GM12878 (cell line): ENCODE measurements at regions of chr17 and their contacts with region 1.

Region 1: GRCh38 chr17:45307290-45308015 is 9.4 kb downstream of the MAP3K14 start:
- DNase-seq: peak; percentile 90
- ATAC-seq: peak; percentile 64
- H3K4me3 ChIP-seq: peak overlapping the region; percentile 14; the same call in 1 of the 2 replicates
- H3K27ac ChIP-seq: peak overlapping the region; percentile 94
- H3K4me1 ChIP-seq: peaks cover 82% of the 10 kb centered on the region
- H3K27me3 ChIP-seq: no peaks in the 10 kb centered on the region
- CTCF ChIP-seq: 0 out of 6 replicates have a peak, but pooled peaks of 1 of the 3 experiments have one; percentile 5
- EP300 ChIP-seq: peak; percentile 75 to 78; a peak in 3 of 4 replicates
- POLR2A ChIP-seq: no peak
- RAD21 ChIP-seq: no peak

Region 2: GRCh38 chr17:44781553-44782495 is 525.6 kb before region 1 on chr17:
- CTCF ChIA-PET with region 1: no interaction called
- POLR2A ChIA-PET with region 1: no interaction called
- RAD21 ChIA-PET with region 1: no interaction called
- SMC1A ChIA-PET with region 1: no interaction called
- in situ Hi-C with region 1: no loop called
- intact Hi-C with region 1: no loop called
- DNase-seq: no peak
- ATAC-seq: no peak
- H3K4me3 ChIP-seq: no peak overlapping the region
- H3K27ac ChIP-seq: no peak overlapping the region
- H3K4me1 ChIP-seq: no peaks in the 10 kb centered on the region
- H3K27me3 ChIP-seq: no peaks in the 10 kb centered on the region; a peak in 1 of 4 replicates
- CTCF ChIP-seq: no peak
- EP300 ChIP-seq: no peak
- POLR2A ChIP-seq: no peak
- RAD21 ChIP-seq: no peak

Region 3: GRCh38 chr17:45228763-45229539 is 78.5 kb before region 1 on chr17:
- CTCF ChIA-PET with region 1: interaction called, 10 read pairs
- POLR2A ChIA-PET with region 1: interaction called, 140 read pairs
- RAD21 ChIA-PET with region 1: interaction called, 22 read pairs
- SMC1A ChIA-PET with region 1: interaction called, 16 read pairs
- in situ Hi-C with region 1: no loop called
- intact Hi-C with region 1: no loop called
- DNase-seq: peak; percentile 68
- ATAC-seq: peak; percentile 56
- H3K4me3 ChIP-seq: peak overlapping the region; percentile 89
- H3K27ac ChIP-seq: peak overlapping the region; percentile 100
- H3K4me1 ChIP-seq: peaks cover 66% of the 10 kb centered on the region
- H3K27me3 ChIP-seq: no peaks in the 10 kb centered on the region
- CTCF ChIP-seq: no peak
- EP300 ChIP-seq: peak; percentile 84 to 91; a peak in 2 of 4 replicates
- POLR2A ChIP-seq: peak; percentile 75
- RAD21 ChIP-seq: no peak

Region 4: DNA sequence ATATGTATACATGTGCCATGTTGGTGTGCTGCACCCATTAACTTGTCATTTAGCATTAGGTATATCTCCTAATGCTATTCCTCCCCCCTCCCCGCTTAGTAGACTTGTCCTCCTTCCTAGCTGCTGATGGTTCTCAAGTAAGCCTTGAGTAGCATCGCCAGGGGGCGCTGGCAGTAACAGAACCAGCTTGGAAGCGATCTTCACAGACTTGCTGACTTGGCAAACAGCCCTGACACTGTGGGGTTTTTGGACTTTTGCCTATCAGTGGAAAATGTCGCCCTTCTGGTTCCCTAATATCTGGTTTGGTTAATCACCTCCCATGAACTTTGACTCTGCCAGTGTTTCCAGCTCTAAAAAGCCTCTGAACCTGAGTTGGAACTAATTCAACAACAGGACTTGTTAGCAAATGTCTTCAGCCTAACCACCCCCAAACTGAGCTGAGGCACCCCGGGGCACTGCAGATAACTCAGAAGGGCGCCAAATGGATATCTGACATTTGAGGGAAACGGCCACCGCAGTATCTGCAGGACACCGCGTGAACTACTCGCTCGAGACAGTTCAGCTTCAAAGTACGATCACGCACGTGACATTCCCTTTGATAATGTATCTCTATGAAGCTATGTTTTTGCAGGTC is 30.1 kb before region 1 on chr17:
- CTCF ChIA-PET with region 1: interaction called, 194 read pairs
- POLR2A ChIA-PET with region 1: interaction called, 19 read pairs
- RAD21 ChIA-PET with region 1: interaction called, 42 read pairs
- SMC1A ChIA-PET with region 1: interaction called, 75 read pairs
- in situ Hi-C with region 1: no loop called
- intact Hi-C with region 1: no loop called
- DNase-seq: peak; percentile 66
- ATAC-seq: peak; percentile 99
- H3K4me3 ChIP-seq: no peak overlapping the region
- H3K27ac ChIP-seq: 0 out of 2 replicates have a peak overlapping the region, but pooled peaks have one; percentile 22
- H3K4me1 ChIP-seq: peaks cover 4% of the 10 kb centered on the region; the same call in 1 of the 2 replicates
- H3K27me3 ChIP-seq: no peaks in the 10 kb centered on the region
- CTCF ChIP-seq: peak; percentile 73 to 85 (median 81)
- EP300 ChIP-seq: no peak
- POLR2A ChIP-seq: no peak
- RAD21 ChIP-seq: peak; percentile 94

Region 5: GRCh38 chr17:45325810-45326209 is 18.4 kb after region 1 on chr17:
- CTCF ChIA-PET with region 1: interaction called, 10 read pairs
- POLR2A ChIA-PET with region 1: interaction called, 7 read pairs
- RAD21 ChIA-PET with region 1: interaction called, 6 read pairs
- SMC1A ChIA-PET with region 1: interaction called, 17 read pairs
- in situ Hi-C with region 1: no loop called
- intact Hi-C with region 1: no loop called
- DNase-seq: no peak
- ATAC-seq: no peak
- H3K4me3 ChIP-seq: no peak overlapping the region
- H3K27ac ChIP-seq: no peak overlapping the region
- H3K4me1 ChIP-seq: peaks cover 22% of the 10 kb centered on the region
- H3K27me3 ChIP-seq: no peaks in the 10 kb centered on the region
- CTCF ChIP-seq: no peak
- EP300 ChIP-seq: no peak
- POLR2A ChIP-seq: no peak
- RAD21 ChIP-seq: no peak

Region 6: GRCh38 chr17:45371414-45372327 is 64.2 kb after region 1 on chr17:
- CTCF ChIA-PET with region 1: interaction called, 9 read pairs
- POLR2A ChIA-PET with region 1: interaction called, 8 read pairs
- RAD21 ChIA-PET with region 1: interaction called, 17 read pairs
- SMC1A ChIA-PET with region 1: interaction called, 16 read pairs
- in situ Hi-C with region 1: no loop called
- intact Hi-C with region 1: loop called (anchors 1 kb)
- DNase-seq: no peak
- ATAC-seq: no peak
- H3K4me3 ChIP-seq: no peak overlapping the region
- H3K27ac ChIP-seq: 0 out of 2 replicates have a peak overlapping the region, but pooled peaks have one; percentile 17
- H3K4me1 ChIP-seq: peaks cover 33% of the 10 kb centered on the region
- H3K27me3 ChIP-seq: no peaks in the 10 kb centered on the region
- CTCF ChIP-seq: no peak
- EP300 ChIP-seq: no peak
- POLR2A ChIP-seq: no peak
- RAD21 ChIP-seq: no peak